OCI-LY7 (cell line): ENCODE measurements at regions of chr20 and their contacts with region 1.

Region 1: GRCh38 chr20:47612670-47613069 is 111.0 kb downstream of the NCOA3 start:
- DNase-seq: peak; percentile 65
- H3K4me3 ChIP-seq: no peak overlapping the region
- H3K27ac ChIP-seq: peak overlapping the region; percentile 25
- H3K4me1 ChIP-seq: peaks cover 50% of the 10 kb centered on the region
- CTCF ChIP-seq: no peak

Region 2: GRCh38 chr20:47263465-47264084 is 349.1 kb before region 1 on chr20:
- CTCF ChIA-PET with region 1: no interaction called
- POLR2A ChIA-PET with region 1: no interaction called
- intact Hi-C with region 1: no loop called
- DNase-seq: peak; percentile 30
- H3K4me3 ChIP-seq: peak overlapping the region; percentile 62
- H3K27ac ChIP-seq: peak overlapping the region; percentile 99
- H3K4me1 ChIP-seq: peaks cover 95% of the 10 kb centered on the region
- CTCF ChIP-seq: no peak

Region 3: GRCh38 chr20:47600967-47601547 is 11.6 kb before region 1 on chr20:
- CTCF ChIA-PET with region 1: no interaction called
- POLR2A ChIA-PET with region 1: interaction called, 11 read pairs
- intact Hi-C with region 1: no loop called
- DNase-seq: no peak
- H3K4me3 ChIP-seq: no peak overlapping the region
- H3K27ac ChIP-seq: no peak overlapping the region
- H3K4me1 ChIP-seq: no peaks in the 10 kb centered on the region
- CTCF ChIP-seq: no peak

Region 4: DNA sequence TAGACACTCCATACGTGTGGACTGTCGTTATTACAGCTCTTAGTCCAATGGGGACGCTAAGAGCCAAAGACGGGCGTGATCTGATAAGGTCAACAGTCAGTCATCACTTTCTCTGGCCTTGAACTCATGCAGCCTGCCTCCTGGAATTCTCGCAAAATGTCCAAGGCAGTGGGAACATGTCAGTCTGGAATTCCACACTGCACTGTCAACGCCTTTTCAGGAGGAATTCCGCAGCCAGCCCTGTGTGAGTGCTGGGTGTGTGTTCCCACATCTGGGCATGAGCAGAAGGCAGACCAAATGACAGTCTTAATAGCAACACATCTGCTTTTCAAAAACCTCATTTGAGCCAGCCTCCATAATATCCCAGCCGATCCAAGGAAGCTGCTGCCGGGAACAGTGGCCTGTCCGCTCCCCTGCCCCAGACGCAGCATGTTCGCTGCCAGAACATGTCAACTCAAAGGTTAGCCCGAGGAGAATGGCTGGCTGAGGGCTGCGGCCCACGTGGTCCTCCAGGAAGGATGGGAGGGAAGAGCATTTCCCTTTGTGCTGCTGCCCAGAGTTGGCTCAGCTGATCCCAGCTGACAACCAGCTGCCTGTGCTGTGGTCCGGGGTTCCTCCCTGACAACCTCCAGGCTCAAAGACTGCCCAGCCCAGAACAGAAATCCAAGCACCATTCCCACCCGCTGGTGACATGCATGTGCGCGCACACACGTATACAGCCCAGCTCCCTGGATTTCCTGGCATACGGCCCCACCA is 69.5 kb after region 1 on chr20:
- CTCF ChIA-PET with region 1: no interaction called
- POLR2A ChIA-PET with region 1: no interaction called
- intact Hi-C with region 1: no loop called
- DNase-seq: no peak
- H3K4me3 ChIP-seq: no peak overlapping the region
- H3K27ac ChIP-seq: no peak overlapping the region
- H3K4me1 ChIP-seq: no peaks in the 10 kb centered on the region
- CTCF ChIP-seq: no peak